ENCODE measurements at regions of chr6 and their contacts with region 1.

Region 1: GRCh38 chr6:138765896-138766655 is 7.5 kb upstream of the CCDC28A start:
- DNase-seq: peak; percentile 60
- H3K4me3 ChIP-seq: no peak overlapping the region
- H3K27ac ChIP-seq: no peak overlapping the region
- H3K4me1 ChIP-seq: no peaks in the 10 kb centered on the region
- H3K27me3 ChIP-seq: no peaks in the 10 kb centered on the region

Region 2: GRCh38 chr6:138597336-138597735 is 168.7 kb before region 1 on chr6:
- in situ Hi-C with region 1: loop called (anchors 5 kb)
- DNase-seq: no peak
- H3K4me3 ChIP-seq: no peak overlapping the region
- H3K27ac ChIP-seq: no peak overlapping the region
- H3K4me1 ChIP-seq: peaks cover 33% of the 10 kb centered on the region
- H3K27me3 ChIP-seq: no peaks in the 10 kb centered on the region